Right ventricle myocardium inferior (tissue), 1 donor: ENCODE measurements at regions of chr2 and their contacts with region 1.

Region 1: DNA sequence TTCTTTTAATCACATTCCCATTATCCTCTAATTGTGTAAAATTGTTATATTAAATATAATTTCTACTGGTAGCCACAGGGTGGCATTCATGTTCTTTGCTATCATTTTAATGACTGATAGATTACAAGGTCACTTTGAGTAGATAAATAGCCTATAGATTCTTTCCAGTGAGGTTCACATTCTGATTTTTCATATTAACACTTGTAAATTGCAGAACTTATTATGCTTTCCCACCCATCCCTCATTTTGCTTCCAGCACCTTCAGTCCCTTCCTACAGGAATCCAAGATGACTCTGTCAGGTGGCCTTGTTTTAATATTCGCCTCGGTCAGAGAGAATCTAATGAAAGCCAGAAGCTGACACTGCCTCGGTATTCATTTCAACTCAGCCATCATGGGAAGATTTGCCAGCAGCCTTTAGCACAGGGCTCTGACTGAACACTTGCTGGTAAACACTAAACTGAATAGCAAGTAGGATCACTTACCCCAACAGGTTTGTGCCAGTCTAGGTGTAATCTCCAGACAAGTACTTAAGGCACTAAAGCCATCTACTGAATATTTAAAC is 101.2 kb upstream of the FSHR start:
- DNase-seq: no peak
- ATAC-seq: no peak

Region 2: GRCh38 chr2:49332415-49332814 is 76.9 kb after region 1 on chr2:
- intact Hi-C with region 1: loop called (anchors 10 kb)
- DNase-seq: no peak
- ATAC-seq: no peak